ENCODE measurements at regions of chr6 and their contacts with region 1.

Region 1: GRCh38 chr6:24205020-24205492 is 79.0 kb downstream of the NRSN1 start:
- DNase-seq: peak; percentile 20
- H3K4me3 ChIP-seq: no peak overlapping the region
- H3K27ac ChIP-seq: no peak overlapping the region
- H3K4me1 ChIP-seq: no peaks in the 10 kb centered on the region
- H3K27me3 ChIP-seq: no peaks in the 10 kb centered on the region
- CTCF ChIP-seq: peak; percentile 51 to 53

Region 2: DNA sequence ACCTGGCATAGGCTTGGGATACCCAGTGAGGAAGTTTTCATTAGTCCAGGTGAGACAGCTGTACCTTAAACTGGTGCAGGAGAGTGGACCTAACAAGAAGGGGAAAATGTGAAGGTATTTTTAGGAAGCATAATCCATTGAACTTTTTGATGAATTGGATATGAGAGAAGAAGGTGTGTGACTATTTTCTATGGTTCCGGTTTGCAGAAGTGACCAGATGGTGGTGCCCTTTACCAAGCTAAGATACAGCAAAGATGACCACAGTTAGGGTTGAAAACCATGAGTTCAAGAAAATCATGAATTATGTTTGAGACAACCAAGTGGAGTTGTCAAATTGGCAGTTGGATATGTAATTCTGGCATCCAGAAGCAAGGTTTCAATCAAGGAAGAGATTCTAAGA is 141.0 kb before region 1 on chr6:
- CTCF ChIA-PET with region 1: no interaction called
- dilution Hi-C with region 1: no loop called
- in situ Hi-C with region 1: no loop called
- intact Hi-C with region 1: loop called (anchors 2 kb)
- DNase-seq: no peak
- H3K4me3 ChIP-seq: no peak overlapping the region
- H3K27ac ChIP-seq: no peak overlapping the region
- H3K4me1 ChIP-seq: no peaks in the 10 kb centered on the region
- H3K27me3 ChIP-seq: no peaks in the 10 kb centered on the region
- CTCF ChIP-seq: no peak

Region 3: DNA sequence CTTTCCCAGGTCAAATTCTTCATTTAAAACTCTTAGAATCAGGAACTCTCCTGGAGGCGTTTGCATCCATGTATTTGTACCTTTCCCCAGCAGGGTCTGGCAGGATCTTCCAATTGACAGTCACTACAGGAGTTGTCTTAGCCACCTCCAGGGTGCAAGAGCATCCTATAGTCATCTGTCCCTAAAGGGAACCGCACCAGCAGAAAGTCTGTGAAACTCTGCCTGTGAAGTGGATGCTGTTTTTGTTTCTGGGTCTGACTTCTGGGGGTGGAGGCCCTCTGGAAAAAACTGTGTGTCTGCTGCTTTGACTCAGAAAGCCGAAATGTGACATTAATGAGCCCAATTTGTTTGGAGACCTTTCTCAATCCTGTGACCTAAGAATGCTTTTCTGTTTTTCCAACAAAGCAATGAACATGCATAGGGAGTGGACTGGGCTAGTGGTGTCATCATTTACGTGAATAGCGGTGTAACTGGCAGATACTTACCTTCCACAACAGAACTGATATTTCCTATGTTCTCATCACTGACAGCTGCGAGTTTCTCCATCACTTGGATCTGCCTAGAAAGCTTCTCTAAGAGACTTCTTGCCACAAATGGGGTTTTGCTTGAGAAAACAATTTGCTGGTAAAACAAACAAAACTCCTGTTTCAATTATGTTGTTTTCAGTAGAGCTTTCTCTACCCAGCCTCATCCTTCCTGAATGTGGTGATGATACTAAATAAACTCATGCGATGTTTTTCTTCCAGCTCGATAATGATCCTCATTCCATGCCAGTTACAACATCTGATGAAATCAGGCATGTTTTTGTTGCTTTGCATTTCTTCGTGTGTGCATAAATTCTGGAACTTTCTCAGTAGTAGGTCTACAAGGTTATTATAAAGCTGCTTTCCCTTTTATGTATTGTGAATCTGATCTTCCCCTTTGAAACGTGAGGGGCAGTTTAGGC is 627.0 kb after region 1 on chr6:
- CTCF ChIA-PET with region 1: no interaction called
- dilution Hi-C with region 1: no loop called
- in situ Hi-C with region 1: no loop called
- intact Hi-C with region 1: no loop called
- DNase-seq: no peak
- H3K4me3 ChIP-seq: no peak overlapping the region
- H3K27ac ChIP-seq: no peak overlapping the region
- H3K4me1 ChIP-seq: peaks cover 14% of the 10 kb centered on the region
- H3K27me3 ChIP-seq: no peaks in the 10 kb centered on the region
- CTCF ChIP-seq: no peak